Calu3 (cell line): ENCODE measurements at regions of chr3 and their contacts with region 1.

Region 1: GRCh38 chr3:142828703-142829305 is 60.1 kb downstream of the PCOLCE2 start:
- DNase-seq: peak; percentile 95
- H3K4me3 Mint-ChIP-seq: no peak overlapping the region
- H3K27ac Mint-ChIP-seq: no peak overlapping the region
- H3K4me1 Mint-ChIP-seq: no peaks in the 10 kb centered on the region
- H3K27me3 Mint-ChIP-seq: no peaks in the 10 kb centered on the region
- CTCF ChIP-seq: peak; percentile 96

Region 2: GRCh38 chr3:142315083-142315482 is 513.7 kb before region 1 on chr3:
- CTCF ChIA-PET with region 1: no interaction called
- intact Hi-C with region 1: no loop called
- DNase-seq: no peak
- H3K4me3 Mint-ChIP-seq: no peak overlapping the region
- H3K27ac Mint-ChIP-seq: no peak overlapping the region
- H3K4me1 Mint-ChIP-seq: no peaks in the 10 kb centered on the region
- H3K27me3 Mint-ChIP-seq: no peaks in the 10 kb centered on the region
- CTCF ChIP-seq: no peak

Region 3: GRCh38 chr3:142586803-142587406 is 241.9 kb before region 1 on chr3:
- CTCF ChIA-PET with region 1: interaction called, 6 read pairs
- intact Hi-C with region 1: loop called (anchors 2 kb)
- DNase-seq: peak; percentile 85
- H3K4me3 Mint-ChIP-seq: no peak overlapping the region
- H3K27ac Mint-ChIP-seq: no peak overlapping the region
- H3K4me1 Mint-ChIP-seq: peaks cover 9% of the 10 kb centered on the region
- H3K27me3 Mint-ChIP-seq: no peaks in the 10 kb centered on the region
- CTCF ChIP-seq: peak; percentile 82

Region 4: DNA sequence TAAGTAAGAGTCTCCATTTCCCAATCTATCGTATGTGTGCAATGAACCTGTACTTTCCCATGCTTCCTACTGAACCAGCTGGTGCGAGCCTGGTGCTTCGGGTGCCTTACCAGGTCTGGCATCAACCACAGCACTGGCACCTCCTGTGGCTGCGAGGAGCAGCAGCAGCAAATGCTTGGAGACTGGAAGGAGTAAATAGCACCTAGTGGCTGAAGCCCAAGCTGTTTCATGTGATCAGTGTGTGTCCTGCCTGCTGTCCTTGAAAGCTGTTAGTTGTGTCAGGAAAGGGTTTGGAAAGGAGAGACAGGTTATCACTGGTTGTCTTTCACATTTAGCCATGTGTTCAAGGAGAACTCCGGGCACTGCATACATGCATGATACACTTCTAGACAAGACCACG is 28.3 kb after region 1 on chr3:
- CTCF ChIA-PET with region 1: interaction called, 18 read pairs
- intact Hi-C with region 1: loop called (anchors 2 kb)
- DNase-seq: peak; percentile 77
- H3K4me3 Mint-ChIP-seq: no peak overlapping the region
- H3K27ac Mint-ChIP-seq: no peak overlapping the region
- H3K4me1 Mint-ChIP-seq: peaks cover 25% of the 10 kb centered on the region
- H3K27me3 Mint-ChIP-seq: peaks cover 7% of the 10 kb centered on the region
- CTCF ChIP-seq: peak; percentile 61

Region 5: DNA sequence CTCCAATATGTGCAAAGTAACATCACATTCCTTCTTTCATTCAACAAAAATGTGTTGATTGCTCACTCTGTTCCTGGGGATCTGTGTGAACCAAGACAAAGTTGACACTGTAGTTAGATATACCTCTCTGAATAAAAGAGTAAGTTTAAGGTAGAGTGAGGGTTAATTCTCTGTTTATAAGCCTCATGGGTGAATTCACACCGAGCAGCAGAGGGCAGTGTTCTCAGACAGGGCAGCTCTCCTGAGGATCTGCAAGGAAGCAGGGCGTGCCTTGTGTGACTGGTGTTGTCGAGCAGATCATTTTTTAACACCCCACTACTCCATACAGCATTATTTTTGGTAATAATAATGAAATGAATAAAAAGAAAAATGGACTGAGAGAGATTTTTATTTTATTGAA is 100.3 kb after region 1 on chr3:
- CTCF ChIA-PET with region 1: interaction called, 19 read pairs
- intact Hi-C with region 1: loop called (anchors 1 kb)
- DNase-seq: peak; percentile 90
- H3K4me3 Mint-ChIP-seq: no peak overlapping the region
- H3K27ac Mint-ChIP-seq: no peak overlapping the region
- H3K4me1 Mint-ChIP-seq: no peaks in the 10 kb centered on the region
- H3K27me3 Mint-ChIP-seq: no peaks in the 10 kb centered on the region
- CTCF ChIP-seq: peak; percentile 87

Region 6: GRCh38 chr3:142993958-142994442 is 165.2 kb after region 1 on chr3:
- CTCF ChIA-PET with region 1: interaction called, 15 read pairs
- intact Hi-C with region 1: loop called (anchors 1 kb)
- DNase-seq: peak; percentile 83
- H3K4me3 Mint-ChIP-seq: no peak overlapping the region
- H3K27ac Mint-ChIP-seq: no peak overlapping the region
- H3K4me1 Mint-ChIP-seq: peaks cover 47% of the 10 kb centered on the region
- H3K27me3 Mint-ChIP-seq: no peaks in the 10 kb centered on the region
- CTCF ChIP-seq: peak; percentile 82